Activated CD4-positive, alpha-beta T cell treated with anti-CD3 and anti-CD28 coated beads for 36 hours (primary cell): ENCODE measurements at regions of chr9 and their contacts with region 1.

Region 1: DNA sequence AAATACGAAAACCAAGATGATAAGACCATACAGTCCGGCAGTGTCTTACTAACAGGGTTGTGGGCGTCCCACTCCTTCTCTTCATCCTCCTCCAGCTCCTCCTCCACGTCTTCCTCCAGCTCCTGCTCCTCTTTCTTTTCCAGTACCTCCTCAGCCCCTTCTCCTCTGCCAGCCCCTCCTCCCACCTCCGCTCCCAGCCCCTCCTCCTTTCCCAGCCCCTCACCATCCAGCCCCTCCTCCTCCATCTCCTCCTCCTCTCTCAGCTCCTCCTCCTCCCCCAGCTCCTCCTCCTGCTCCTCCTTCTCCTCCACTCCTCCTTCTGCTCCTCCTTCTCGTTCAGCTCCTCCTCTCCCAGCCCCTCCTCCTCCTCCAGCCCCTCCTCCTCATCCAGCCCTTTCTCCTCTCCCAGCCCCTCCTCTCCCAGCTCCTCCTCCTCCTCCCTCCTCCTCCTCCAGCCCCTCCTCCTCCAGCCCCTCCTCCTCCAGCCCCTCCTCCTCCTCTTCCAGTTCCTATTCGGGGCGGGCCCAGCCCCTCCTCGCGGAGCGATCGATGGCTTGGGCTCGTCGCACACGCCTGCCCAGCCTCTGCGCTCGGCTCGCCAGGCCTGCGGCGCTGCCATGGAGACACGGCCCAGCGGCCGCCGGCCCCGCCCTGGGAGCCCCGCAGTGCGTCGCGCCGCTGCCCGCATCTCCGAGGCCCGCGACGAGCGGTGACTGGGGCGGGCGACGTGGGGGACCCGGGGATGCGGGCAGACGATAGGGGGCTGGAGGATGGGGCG is at the start of gene BRD3OS:
- DNase-seq: peak; percentile 96
- ATAC-seq: peak; percentile 91
- H3K4me3 Mint-ChIP-seq: peak within 1 kb of the TSS; percentile 74
- H3K27ac Mint-ChIP-seq: no peak within 1 kb of the TSS
- H3K4me1 Mint-ChIP-seq: peaks cover 4% of the 10 kb centered on the region
- H3K27me3 Mint-ChIP-seq: no peaks in the 10 kb centered on the region
- total RNA-seq, gene BRD3OS: 15.1 to 18.0 TPM

Region 2: GRCh38 chr9:132584601-132585560 is 1440.1 kb before region 1 on chr9:
- CTCF ChIA-PET with region 1: no interaction called
- POLR2A ChIA-PET with region 1: no interaction called
- intact Hi-C with region 1: no loop called
- DNase-seq: no peak
- ATAC-seq: no peak
- H3K4me3 Mint-ChIP-seq: no peak overlapping the region
- H3K27ac Mint-ChIP-seq: no peak overlapping the region
- H3K4me1 Mint-ChIP-seq: peaks cover 13% of the 10 kb centered on the region
- H3K27me3 Mint-ChIP-seq: peaks cover 56% of the 10 kb centered on the region

Region 3: GRCh38 chr9:133459476-133460404 is 565.3 kb before region 1 on chr9 and contains the start of gene CACFD1:
- CTCF ChIA-PET with region 1: no interaction called
- POLR2A ChIA-PET with region 1: no interaction called
- intact Hi-C with region 1: loop called in 1 of 2 experiments (anchors 1 kb)
- DNase-seq: peak; percentile 96
- ATAC-seq: peak; percentile 88
- H3K4me3 Mint-ChIP-seq: peak within 1 kb of the TSS; percentile 74
- H3K27ac Mint-ChIP-seq: peak within 1 kb of the TSS; percentile 42
- H3K4me1 Mint-ChIP-seq: no peaks in the 10 kb centered on the region
- H3K27me3 Mint-ChIP-seq: no peaks in the 10 kb centered on the region
- total RNA-seq, gene CACFD1: 0.87 to 0.90 TPM

Region 4: DNA sequence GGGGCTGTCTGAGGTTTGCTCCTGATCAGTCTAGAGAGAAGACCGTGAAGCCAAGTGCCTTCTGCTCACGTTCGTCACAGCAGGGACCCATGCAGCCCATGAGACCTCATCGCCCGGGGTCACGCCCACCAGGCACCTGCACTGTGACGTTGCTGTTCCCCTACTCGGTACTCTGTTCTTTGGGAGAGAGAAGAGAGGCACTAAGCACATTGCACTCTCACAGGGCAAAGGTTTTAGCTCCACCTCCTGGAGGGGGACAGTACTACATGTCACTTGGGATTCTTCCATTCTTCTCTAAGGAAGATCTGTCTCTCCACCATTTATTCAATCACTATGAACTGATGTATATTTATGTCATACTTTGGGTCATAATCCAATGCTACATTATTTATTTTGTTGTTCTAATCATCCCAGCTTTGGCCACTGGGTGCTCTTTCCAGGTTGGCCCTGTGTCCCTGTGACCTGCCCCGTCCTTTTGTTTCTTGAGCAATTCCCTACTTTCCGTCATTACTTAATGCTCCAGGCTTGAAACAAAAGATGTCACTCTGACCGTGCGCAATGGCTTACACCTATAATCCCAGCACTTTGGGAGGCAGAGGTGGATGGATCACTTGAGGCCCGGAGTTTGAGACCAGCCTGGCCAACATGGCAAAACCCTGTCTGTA is 74.2 kb after region 1 on chr9:
- CTCF ChIA-PET with region 1: interaction called, 3 read pairs
- POLR2A ChIA-PET with region 1: no interaction called
- intact Hi-C with region 1: loop called in 1 of 2 experiments (anchors 1 kb)
- DNase-seq: peak; percentile 75
- ATAC-seq: peak; percentile 86
- H3K4me3 Mint-ChIP-seq: no peak overlapping the region
- H3K27ac Mint-ChIP-seq: no peak overlapping the region
- H3K4me1 Mint-ChIP-seq: no peaks in the 10 kb centered on the region
- H3K27me3 Mint-ChIP-seq: peaks cover 17% of the 10 kb centered on the region

Region 5: GRCh38 chr9:134163353-134164196 is 138.6 kb after region 1 on chr9:
- CTCF ChIA-PET with region 1: no interaction called
- POLR2A ChIA-PET with region 1: interaction called, 3 read pairs
- intact Hi-C with region 1: loop called in 1 of 2 experiments (anchors 1 kb)
- DNase-seq: peak; percentile 83
- ATAC-seq: peak; percentile 39
- H3K4me3 Mint-ChIP-seq: no peak overlapping the region
- H3K27ac Mint-ChIP-seq: no peak overlapping the region
- H3K4me1 Mint-ChIP-seq: peaks cover 2% of the 10 kb centered on the region
- H3K27me3 Mint-ChIP-seq: no peaks in the 10 kb centered on the region

Region 6: DNA sequence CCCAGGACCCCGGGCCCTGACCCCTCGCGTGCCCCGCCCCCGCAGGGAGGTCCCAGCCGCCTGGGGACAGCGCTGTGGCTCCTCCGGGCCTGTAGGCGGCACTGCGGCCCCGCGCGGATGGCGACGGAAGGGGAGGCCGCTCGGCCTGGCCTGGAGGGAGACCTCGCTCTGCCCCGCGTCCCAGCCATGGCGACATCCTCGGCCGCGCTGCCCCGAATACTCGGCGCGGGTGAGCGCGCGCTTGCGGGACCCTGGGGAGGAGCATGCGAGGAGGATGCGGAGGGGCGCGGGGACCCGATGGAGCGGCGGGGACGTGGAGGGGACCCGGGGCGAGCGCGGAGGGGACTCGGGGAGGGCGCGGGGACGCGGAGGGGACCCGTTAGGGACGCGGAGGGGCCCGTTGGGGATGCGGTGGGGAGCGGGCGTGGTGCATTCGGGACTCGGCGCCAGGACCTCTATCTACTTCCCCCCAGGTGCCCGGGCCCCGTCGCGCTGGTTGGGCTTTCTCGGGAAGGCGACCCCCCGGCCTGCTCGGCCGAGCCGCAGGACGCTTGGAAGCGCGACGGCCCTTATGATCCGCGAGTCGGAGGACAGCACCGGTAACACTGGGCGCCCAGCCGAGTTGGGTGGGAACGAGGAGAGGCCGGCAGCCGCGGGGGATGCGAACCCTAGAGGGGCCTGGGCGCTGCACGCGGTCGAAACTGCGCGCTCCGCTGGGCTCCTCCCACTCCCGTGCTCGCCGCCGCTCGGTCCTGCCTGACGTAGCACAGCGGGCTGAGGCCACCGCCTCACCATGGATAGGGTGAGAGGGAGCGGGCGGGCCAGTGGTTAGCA is 1475.7 kb after region 1 on chr9 and contains the start of gene MRPS2:
- CTCF ChIA-PET with region 1: no interaction called
- POLR2A ChIA-PET with region 1: no interaction called
- intact Hi-C with region 1: loop called in 1 of 2 experiments (anchors 1 kb)
- DNase-seq: peak; percentile 91
- ATAC-seq: peak; percentile 93
- H3K4me3 Mint-ChIP-seq: peak within 1 kb of the TSS; percentile 85
- H3K27ac Mint-ChIP-seq: peak within 1 kb of the TSS; percentile 91
- H3K4me1 Mint-ChIP-seq: peaks cover 19% of the 10 kb centered on the region
- H3K27me3 Mint-ChIP-seq: no peaks in the 10 kb centered on the region
- total RNA-seq, gene MRPS2: 50.0 to 70.6 TPM